ENCODE measurements at regions of chr20 and their contacts with region 1.

Region 1: DNA sequence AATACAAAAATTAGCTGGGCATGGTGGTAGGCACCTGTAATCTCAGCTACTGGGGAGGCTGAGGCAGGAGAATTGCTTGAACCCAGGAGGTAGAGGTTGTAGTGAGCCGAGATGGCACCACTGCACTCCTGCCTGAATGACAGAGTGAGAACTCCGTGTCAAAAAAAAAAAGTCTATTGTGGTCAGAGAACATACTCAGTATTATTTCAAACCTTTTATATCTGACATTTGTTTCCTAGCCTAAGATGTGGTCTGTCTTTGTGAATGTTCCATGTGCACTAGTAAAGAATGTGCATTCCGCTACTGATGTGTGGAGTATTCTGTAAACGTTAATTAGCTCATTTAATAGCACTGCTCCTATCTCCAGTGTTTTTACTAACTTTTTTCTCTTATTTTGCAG is 11.7 kb downstream of the RAB22A start:
- DNase-seq: no peak
- ATAC-seq: no peak
- H3K4me3 ChIP-seq: no peak overlapping the region
- H3K27ac ChIP-seq: no peak overlapping the region
- H3K4me1 ChIP-seq: no peaks in the 10 kb centered on the region
- H3K27me3 ChIP-seq: no peaks in the 10 kb centered on the region
- CTCF ChIP-seq: no peak
- EP300 ChIP-seq: no peak
- POLR2A ChIP-seq: no peak
- RAD21 ChIP-seq: no peak

Region 2: GRCh38 chr20:58374906-58375791 is 53.9 kb after region 1 on chr20:
- CTCF ChIA-PET with region 1: no interaction called
- POLR2A ChIA-PET with region 1: no interaction called
- in situ Hi-C with region 1: no loop called
- intact Hi-C with region 1: loop called (anchors 2 kb)
- DNase-seq: no peak
- ATAC-seq: peak; percentile 17
- H3K4me3 ChIP-seq: peak overlapping the region; percentile 34 to 37 (median 37); a peak in 5 of 6 replicates
- H3K27ac ChIP-seq: no peak overlapping the region
- H3K4me1 ChIP-seq: peaks cover 34% of the 10 kb centered on the region
- H3K27me3 ChIP-seq: no peaks in the 10 kb centered on the region
- CTCF ChIP-seq: no peak
- EP300 ChIP-seq: no peak
- POLR2A ChIP-seq: no peak
- RAD21 ChIP-seq: no peak

Measured in HepG2 (cell line).